Thyroid gland (tissue), 4 donors: ENCODE measurements at regions of chr15 and their contacts with region 1.

Region 1: GRCh38 chr15:77543159-77543882 is 89.4 kb downstream of the LINGO1 start:
- DNase-seq: peak; percentile 88
- H3K4me3 ChIP-seq: peak overlapping the region in 1 of 3 donors; percentile 25
- H3K27ac ChIP-seq: peak overlapping the region in 1 of 3 donors; percentile 34
- H3K4me1 ChIP-seq: peaks cover 14 to 23% of the 10 kb centered on the region in 2 donors
- H3K27me3 ChIP-seq: no peaks in the 10 kb centered on the region
- CTCF ChIP-seq: peak; percentile 88 to 99 (median 98)
- POLR2A ChIP-seq: no peak

Region 2: DNA sequence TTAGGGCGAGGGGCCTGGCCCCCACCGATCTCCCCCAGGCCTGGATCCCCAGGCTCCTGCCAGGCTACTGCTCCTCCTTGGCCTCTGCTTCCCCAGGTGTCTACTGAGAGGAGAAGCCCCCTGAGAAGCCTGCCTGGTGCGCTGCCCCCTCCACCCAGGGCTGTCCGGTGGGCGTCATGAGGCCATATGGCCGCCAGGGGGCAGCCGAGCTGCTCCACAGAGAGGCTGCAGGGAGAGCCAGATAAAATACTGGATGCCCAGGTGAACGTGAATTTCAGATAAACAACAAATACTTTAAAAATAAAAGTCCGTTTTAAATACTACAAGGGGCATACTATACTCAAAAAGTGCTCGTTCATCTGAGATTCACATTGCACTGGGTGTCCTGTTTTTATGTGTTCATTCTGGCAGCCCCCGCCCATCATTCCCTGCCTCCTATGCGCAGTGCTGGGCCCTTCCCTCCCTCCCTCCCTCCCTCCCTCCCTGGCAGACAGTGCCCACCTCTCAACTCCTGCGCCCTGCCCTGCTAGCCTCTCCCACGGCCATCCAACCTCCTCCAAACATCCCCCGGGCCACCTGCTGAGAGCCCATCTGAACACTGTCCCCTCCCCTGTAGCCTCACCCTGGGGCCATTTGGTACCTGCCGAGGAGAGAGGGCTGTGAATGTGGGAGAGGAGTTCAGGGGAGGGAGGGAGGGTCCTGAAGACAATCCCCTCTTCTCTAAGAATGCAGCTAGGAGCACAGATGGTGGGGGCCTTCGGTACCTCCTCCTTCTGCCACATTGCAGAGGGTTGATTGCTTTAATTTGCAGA is 518.8 kb before region 1 on chr15:
- intact Hi-C with region 1: loop called (anchors 5 kb)
- DNase-seq: peak; percentile 63 to 70
- H3K4me3 ChIP-seq: no peak overlapping the region
- H3K27ac ChIP-seq: no peak overlapping the region
- H3K4me1 ChIP-seq: peaks cover 0 to 9% of the 10 kb centered on the region in 2 donors
- H3K27me3 ChIP-seq: no peaks in the 10 kb centered on the region
- CTCF ChIP-seq: peak; percentile 77 to 97 (median 88)
- POLR2A ChIP-seq: no peak

Region 3: GRCh38 chr15:77118882-77119321 is 424.4 kb before region 1 on chr15:
- intact Hi-C with region 1: loop called (anchors 5 kb)
- DNase-seq: peak; percentile 42 to 52
- H3K4me3 ChIP-seq: no peak overlapping the region
- H3K27ac ChIP-seq: no peak overlapping the region
- H3K4me1 ChIP-seq: peaks cover 5 to 6% of the 10 kb centered on the region in 2 donors
- H3K27me3 ChIP-seq: no peaks in the 10 kb centered on the region
- CTCF ChIP-seq: peak; percentile 34 to 81 (median 61)
- POLR2A ChIP-seq: no peak

Region 4: DNA sequence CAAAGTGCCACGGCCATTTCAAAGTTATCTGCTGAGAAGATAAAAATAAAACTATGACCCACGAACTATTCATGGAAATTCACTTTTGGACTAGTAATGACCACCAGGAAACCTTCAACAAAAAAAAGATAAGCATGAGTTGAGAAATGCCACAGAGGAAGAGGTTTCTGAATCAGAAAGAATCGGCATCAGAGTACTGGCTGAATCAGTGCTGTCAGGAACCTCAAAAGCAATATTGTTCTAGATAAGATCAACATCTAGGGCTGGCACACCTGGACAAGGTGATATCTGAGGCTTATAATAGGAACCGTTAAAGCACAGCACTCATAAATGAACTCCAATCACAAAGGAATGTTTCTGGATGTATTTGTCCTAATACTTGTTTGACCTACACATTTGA is 196.1 kb before region 1 on chr15:
- intact Hi-C with region 1: no loop called
- DNase-seq: no peak
- H3K4me3 ChIP-seq: no peak overlapping the region
- H3K27ac ChIP-seq: no peak overlapping the region
- H3K4me1 ChIP-seq: no peaks in the 10 kb centered on the region
- H3K27me3 ChIP-seq: no peaks in the 10 kb centered on the region
- CTCF ChIP-seq: no peak
- POLR2A ChIP-seq: no peak